ENCODE measurements at regions of chr18 and their contacts with region 1.

Region 1: GRCh38 chr18:55589625-55590291 is 1.8 kb upstream of the TCF4 start:
- DNase-seq: peak; percentile 98
- H3K4me3 ChIP-seq: peak overlapping the region; percentile 88
- H3K27ac ChIP-seq: peak overlapping the region; percentile 88
- H3K4me1 ChIP-seq: peaks cover 15% of the 10 kb centered on the region
- H3K27me3 ChIP-seq: no peaks in the 10 kb centered on the region

Region 2: GRCh38 chr18:55452123-55452611 is 137.6 kb before region 1 on chr18:
- in situ Hi-C with region 1: no loop called
- DNase-seq: peak; percentile 47
- H3K4me3 ChIP-seq: no peak overlapping the region
- H3K27ac ChIP-seq: no peak overlapping the region
- H3K4me1 ChIP-seq: no peaks in the 10 kb centered on the region
- H3K27me3 ChIP-seq: no peaks in the 10 kb centered on the region

Region 3: DNA sequence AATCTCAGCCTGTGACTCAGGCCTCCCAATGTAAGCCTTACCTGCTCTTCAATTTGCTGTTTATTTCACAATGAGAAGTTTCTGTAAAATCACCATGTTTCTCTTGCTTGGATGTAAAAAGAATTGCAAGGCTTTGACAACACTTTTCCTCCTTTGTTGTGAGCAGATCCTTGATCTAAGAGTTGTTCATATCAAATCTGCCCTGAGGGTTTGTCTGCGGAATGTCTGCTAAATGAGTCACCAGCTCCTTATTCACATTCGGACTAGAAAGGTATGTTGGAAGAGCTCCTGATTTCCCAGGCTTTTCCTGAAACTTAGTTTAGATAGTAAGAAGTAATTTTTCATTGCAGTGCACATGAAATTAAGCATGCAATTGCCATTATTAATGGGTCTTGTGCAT is 266.5 kb after region 1 on chr18:
- in situ Hi-C with region 1: loop called (anchors 10 kb)
- DNase-seq: peak; percentile 87
- H3K4me3 ChIP-seq: no peak overlapping the region
- H3K27ac ChIP-seq: peak overlapping the region; percentile 35
- H3K4me1 ChIP-seq: peaks cover 32% of the 10 kb centered on the region
- H3K27me3 ChIP-seq: no peaks in the 10 kb centered on the region

Region 4: DNA sequence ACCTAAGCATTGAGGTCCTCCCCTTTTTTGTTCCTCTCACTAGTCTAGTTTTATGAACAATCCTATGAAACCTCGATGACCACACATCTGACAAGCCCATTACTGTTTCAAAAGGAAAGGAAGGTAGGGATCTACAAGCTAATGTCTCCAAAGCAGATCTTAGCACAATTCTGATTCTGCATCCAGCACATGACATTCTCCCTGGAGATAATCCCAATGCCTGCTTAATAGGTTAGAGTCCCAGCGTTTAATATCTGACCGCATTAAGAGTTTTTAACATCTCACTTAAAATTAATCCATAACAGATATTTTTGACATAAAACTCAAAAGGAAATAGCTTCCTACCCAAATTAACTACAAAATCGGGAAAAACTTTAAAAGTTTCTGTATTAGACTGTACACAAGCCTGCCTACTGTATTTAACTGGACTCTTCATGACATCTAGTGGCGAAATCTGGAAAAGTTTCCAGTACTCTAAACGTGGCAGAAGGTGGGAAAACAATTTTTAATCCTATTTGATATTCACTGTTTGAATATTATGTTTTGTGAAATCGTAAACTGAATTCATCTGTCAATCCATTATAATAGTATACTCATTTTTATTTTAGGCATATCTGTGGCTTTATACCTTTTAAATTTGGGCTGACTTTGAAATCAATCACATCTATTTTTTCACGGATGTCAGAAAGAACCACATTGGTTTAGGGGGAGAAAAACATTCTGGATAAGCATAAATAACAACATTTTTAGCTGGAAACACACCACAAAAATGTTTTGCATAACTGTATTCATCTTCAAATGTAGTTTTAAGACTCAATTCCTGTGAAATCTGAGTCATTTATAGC is 986.3 kb after region 1 on chr18:
- in situ Hi-C with region 1: loop called (anchors 10 kb)
- DNase-seq: peak; percentile 77
- H3K4me3 ChIP-seq: no peak overlapping the region
- H3K27ac ChIP-seq: no peak overlapping the region
- H3K4me1 ChIP-seq: no peaks in the 10 kb centered on the region
- H3K27me3 ChIP-seq: no peaks in the 10 kb centered on the region